Dendritic cell treated with granulocyte-macrophage colony-stimulating factor and Interleukin-4, amounts not matched to agents 40 ng/mL and 50 ng/mL, for 4 days (primary cell): ENCODE measurements at regions of chr21 and their contacts with region 1.

Region 1: DNA sequence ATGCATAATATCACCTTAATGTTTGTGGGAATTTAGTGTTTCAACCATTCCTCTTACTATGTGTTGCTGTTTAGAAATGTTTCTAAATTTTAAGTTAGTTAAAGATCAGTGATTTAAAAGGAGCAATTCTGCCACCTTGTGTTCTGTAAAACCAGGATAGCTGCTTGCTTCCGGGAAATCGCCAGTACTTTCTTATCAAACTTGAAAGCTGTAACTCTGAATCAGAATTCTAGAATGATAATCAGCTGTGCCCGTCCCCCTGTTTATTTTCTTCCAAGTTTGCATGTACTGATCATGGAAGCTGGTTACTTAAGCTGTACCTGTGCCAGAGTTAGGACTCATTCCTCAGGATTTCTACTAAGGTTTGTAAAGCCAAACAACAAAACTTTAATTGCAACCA is 656.4 kb downstream of the LTN1 start:
- H3K4me3 Mint-ChIP-seq: no peak overlapping the region
- H3K27ac Mint-ChIP-seq: no peak overlapping the region
- H3K4me1 Mint-ChIP-seq: no peaks in the 10 kb centered on the region
- H3K27me3 Mint-ChIP-seq: no peaks in the 10 kb centered on the region

Region 2: DNA sequence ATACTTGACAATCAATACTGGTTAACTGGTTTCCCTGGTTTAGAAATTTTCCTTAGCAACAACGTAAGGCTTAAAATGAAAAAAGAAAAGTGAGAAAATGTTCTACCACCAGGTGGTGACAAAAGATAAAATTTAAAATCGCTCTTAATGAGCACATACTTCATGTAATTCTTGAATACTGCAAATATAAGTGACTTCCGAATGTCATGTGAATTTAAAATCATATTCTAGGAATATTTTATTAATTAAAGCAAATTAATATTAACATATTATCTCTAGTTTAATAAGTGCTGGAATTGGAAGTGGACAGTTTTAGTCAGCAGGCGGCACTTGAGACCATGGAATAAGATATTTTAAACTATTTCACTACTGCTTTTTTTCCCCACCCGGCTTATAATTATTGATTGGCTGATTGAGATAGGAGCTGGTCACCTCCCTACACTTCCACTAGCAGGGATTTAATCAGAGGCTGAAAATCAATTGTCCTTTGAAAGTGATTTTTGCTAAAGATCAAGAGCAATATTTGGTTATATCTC is 1486.1 kb before region 1 on chr21:
- intact Hi-C with region 1: loop called (anchors 2 kb)
- H3K4me3 Mint-ChIP-seq: no peak overlapping the region
- H3K27ac Mint-ChIP-seq: no peak overlapping the region
- H3K4me1 Mint-ChIP-seq: peaks cover 22% of the 10 kb centered on the region
- H3K27me3 Mint-ChIP-seq: peaks cover 32% of the 10 kb centered on the region

Region 3: DNA sequence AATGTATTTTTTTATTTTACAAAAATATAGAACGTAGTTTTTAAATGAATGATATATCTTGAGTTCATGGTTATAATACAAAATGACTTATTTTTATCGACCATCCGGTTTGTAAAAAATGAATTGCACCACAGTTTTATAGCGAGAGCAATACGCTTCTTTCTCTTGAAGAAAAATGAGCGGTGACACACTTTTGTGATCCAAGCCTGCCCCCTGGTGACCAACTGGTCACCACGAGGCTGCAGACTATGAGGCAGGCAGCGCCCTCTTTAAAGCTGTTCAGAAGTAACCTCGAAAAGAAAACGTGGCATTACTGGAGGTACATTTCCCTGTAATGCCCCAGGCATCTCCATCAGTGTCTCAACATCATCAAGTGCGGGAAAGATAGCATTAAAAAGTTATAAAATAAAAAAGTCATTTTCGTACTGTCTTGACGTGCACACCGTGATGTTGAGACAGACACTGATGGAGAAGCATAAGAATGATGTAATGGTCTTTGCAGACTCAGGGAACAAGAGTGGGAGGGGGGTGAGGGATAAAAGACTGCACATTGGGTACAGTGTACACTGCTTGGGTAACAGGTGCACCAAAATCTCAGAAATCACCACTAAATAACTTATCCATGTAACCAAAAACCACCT is 635.2 kb before region 1 on chr21:
- intact Hi-C with region 1: loop called (anchors 5 kb)
- H3K4me3 Mint-ChIP-seq: no peak overlapping the region
- H3K27ac Mint-ChIP-seq: no peak overlapping the region
- H3K4me1 Mint-ChIP-seq: no peaks in the 10 kb centered on the region
- H3K27me3 Mint-ChIP-seq: no peaks in the 10 kb centered on the region

Region 4: DNA sequence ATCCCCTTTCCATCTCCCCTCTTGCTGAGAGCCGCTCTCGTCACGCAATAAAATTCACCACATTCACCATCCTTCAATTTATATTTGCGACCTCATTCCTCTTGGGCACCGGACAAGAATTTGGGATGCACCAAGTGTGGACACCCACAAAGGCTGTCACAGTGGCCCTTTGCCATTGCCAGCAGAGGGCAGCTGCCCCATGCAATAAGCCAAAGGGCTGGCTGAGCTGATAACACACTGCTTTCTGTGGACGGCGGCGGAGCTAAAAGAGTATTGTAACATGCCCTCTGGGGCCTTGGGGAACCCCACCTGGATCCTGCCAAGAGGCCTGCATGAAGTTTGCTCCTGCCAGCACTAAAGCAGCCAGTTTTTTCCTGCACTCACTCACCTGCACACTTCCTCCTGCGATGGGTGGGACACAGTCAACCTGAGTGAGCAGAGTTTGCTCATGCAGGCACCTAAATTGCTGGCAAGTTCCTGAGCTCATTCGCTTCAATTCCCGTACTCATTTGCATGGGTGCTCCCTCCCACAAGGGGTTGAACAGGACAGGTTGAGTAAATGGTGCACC is 577.1 kb before region 1 on chr21:
- intact Hi-C with region 1: loop called (anchors 5 kb)
- H3K4me3 Mint-ChIP-seq: no peak overlapping the region
- H3K27ac Mint-ChIP-seq: no peak overlapping the region
- H3K4me1 Mint-ChIP-seq: no peaks in the 10 kb centered on the region
- H3K27me3 Mint-ChIP-seq: no peaks in the 10 kb centered on the region

Region 5: DNA sequence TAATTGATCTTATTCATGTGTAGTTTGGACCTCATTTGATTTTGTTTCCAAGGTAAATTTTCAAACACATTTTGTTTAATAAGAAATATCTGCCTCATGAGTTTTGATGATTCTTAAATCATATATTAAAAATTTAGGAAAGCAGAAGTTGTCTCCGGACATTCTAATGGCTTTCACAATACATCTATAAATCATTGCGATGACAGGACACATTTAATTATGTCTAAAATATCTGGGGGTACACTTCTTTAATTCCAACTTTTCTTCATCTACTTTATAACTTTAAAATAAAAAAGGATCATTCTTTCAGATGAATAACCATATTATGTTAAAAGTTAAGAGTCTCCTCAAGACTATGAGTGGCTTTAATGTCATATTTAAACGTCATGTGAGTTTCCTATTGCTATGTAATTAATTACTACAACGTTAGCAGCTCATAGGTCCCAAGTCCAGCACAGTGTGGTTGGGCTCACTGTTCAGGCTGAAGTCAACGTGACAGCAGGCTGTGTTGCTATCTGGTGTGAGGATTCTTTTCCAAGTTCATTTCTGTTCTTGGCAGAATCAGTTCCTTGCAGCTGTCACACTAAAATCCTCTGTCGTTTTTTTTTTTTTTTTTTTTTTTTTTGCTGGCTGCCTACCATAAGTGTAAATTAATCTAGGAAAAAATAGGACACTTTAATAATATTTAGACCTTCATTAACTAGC is 237.2 kb before region 1 on chr21:
- intact Hi-C with region 1: loop called (anchors 2 kb)
- H3K4me3 Mint-ChIP-seq: no peak overlapping the region
- H3K27ac Mint-ChIP-seq: no peak overlapping the region
- H3K4me1 Mint-ChIP-seq: no peaks in the 10 kb centered on the region
- H3K27me3 Mint-ChIP-seq: no peaks in the 10 kb centered on the region

Region 6: GRCh38 chr21:28298251-28298672 is 38.1 kb before region 1 on chr21:
- intact Hi-C with region 1: no loop called
- H3K4me3 Mint-ChIP-seq: no peak overlapping the region
- H3K27ac Mint-ChIP-seq: no peak overlapping the region
- H3K4me1 Mint-ChIP-seq: no peaks in the 10 kb centered on the region
- H3K27me3 Mint-ChIP-seq: no peaks in the 10 kb centered on the region

Region 7: GRCh38 chr21:28393279-28393678 is 57.0 kb after region 1 on chr21:
- intact Hi-C with region 1: no loop called
- H3K4me3 Mint-ChIP-seq: no peak overlapping the region
- H3K27ac Mint-ChIP-seq: no peak overlapping the region
- H3K4me1 Mint-ChIP-seq: no peaks in the 10 kb centered on the region
- H3K27me3 Mint-ChIP-seq: no peaks in the 10 kb centered on the region